ENCODE measurements at regions of chr14 and their contacts with region 1.

Region 1: GRCh38 chr14:64800000-64800399 is 79.7 kb downstream of the SPTB start:
- DNase-seq: no peak
- ATAC-seq: no peak
- H3K4me3 ChIP-seq: no peak overlapping the region
- H3K27ac ChIP-seq: no peak overlapping the region
- H3K4me1 ChIP-seq: no peaks in the 10 kb centered on the region
- H3K27me3 ChIP-seq: no peaks in the 10 kb centered on the region

Region 2: DNA sequence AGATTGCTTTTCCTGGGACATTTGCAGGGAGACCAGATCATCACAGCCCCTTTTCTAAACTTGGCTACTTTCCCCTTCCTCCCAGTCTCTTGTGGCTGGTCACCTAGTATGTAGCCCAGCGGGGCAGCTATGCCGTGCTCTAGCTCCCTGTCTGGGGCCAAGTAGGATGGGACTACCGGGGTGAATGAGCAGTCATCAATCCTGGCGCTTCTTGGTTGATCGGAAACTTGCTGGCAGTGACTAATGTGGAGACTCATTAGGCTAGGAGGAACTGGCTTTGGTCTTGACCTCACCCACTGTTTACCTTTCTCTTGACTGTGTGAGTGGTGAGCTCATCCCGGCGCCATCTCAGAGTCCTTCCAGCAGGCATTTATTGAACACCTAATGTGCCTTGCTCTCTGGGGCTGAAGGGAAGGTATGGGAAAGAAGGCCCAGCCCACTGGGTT is 79.8 kb before region 1 on chr14:
- intact Hi-C with region 1: no loop called
- DNase-seq: peak in 1 of 2 donors; percentile 70
- ATAC-seq: no peak
- H3K4me3 ChIP-seq: no peak overlapping the region
- H3K27ac ChIP-seq: peak overlapping the region in 1 of 2 donors; percentile 96
- H3K4me1 ChIP-seq: peaks cover 11 to 21% of the 10 kb centered on the region in 2 donors
- H3K27me3 ChIP-seq: no peaks in the 10 kb centered on the region

Region 3: GRCh38 chr14:64841121-64841651 is 41.2 kb after region 1 on chr14:
- intact Hi-C with region 1: loop called in 1 of 2 experiments (anchors 5 kb)
- DNase-seq: no peak
- ATAC-seq: peak; percentile 43
- H3K4me3 ChIP-seq: no peak overlapping the region
- H3K27ac ChIP-seq: no peak overlapping the region
- H3K4me1 ChIP-seq: peaks cover 0 to 2% of the 10 kb centered on the region in 2 donors
- H3K27me3 ChIP-seq: no peaks in the 10 kb centered on the region

Region 4: GRCh38 chr14:64891839-64892375 is 91.9 kb after region 1 on chr14:
- intact Hi-C with region 1: loop called in 1 of 2 experiments (anchors 5 kb)
- DNase-seq: no peak
- ATAC-seq: peak; percentile 62
- H3K4me3 ChIP-seq: no peak overlapping the region
- H3K27ac ChIP-seq: no peak overlapping the region
- H3K4me1 ChIP-seq: no peaks in the 10 kb centered on the region
- H3K27me3 ChIP-seq: no peaks in the 10 kb centered on the region

Region 5: DNA sequence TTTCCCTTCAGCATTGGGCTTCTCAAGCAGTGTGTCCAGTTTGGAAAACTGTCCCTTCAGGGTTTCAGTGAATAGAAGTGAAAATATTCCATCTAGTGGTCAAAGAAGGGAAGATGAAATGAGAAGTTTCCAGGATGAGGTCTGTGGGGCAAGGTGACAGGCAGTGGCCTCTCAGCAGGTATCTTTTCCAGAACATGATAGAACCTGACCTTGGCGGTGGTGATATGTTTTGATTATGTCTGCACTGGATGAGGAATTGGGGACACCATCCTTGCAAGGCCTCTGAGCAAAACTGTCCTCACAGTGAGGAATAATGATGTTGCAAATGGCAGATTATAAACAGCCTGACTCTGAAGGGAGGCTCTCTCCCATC is 137.8 kb after region 1 on chr14:
- intact Hi-C with region 1: loop called in 1 of 2 experiments (anchors 5 kb)
- DNase-seq: no peak
- ATAC-seq: no peak
- H3K4me3 ChIP-seq: no peak overlapping the region
- H3K27ac ChIP-seq: no peak overlapping the region
- H3K4me1 ChIP-seq: peaks cover 0 to 5% of the 10 kb centered on the region in 2 donors
- H3K27me3 ChIP-seq: no peaks in the 10 kb centered on the region

Measured in aorta (tissue), 5 donors.